B cell (primary cell): ENCODE measurements at regions of chr5 and their contacts with region 1.

Region 1: GRCh38 chr5:18216016-18216415 is 581.8 kb downstream of the TAF11L14 start:
- DNase-seq: no peak
- ATAC-seq: no peak
- H3K4me3 ChIP-seq: no peak overlapping the region
- H3K4me3 Mint-ChIP-seq: no peak overlapping the region
- H3K27ac ChIP-seq: no peak overlapping the region
- H3K27ac Mint-ChIP-seq: no peak overlapping the region
- H3K4me1 ChIP-seq: no peaks in the 10 kb centered on the region
- H3K4me1 Mint-ChIP-seq: no peaks in the 10 kb centered on the region
- H3K27me3 ChIP-seq: no peaks in the 10 kb centered on the region
- H3K27me3 Mint-ChIP-seq: no peaks in the 10 kb centered on the region
- CTCF ChIP-seq: no peak

Region 2: DNA sequence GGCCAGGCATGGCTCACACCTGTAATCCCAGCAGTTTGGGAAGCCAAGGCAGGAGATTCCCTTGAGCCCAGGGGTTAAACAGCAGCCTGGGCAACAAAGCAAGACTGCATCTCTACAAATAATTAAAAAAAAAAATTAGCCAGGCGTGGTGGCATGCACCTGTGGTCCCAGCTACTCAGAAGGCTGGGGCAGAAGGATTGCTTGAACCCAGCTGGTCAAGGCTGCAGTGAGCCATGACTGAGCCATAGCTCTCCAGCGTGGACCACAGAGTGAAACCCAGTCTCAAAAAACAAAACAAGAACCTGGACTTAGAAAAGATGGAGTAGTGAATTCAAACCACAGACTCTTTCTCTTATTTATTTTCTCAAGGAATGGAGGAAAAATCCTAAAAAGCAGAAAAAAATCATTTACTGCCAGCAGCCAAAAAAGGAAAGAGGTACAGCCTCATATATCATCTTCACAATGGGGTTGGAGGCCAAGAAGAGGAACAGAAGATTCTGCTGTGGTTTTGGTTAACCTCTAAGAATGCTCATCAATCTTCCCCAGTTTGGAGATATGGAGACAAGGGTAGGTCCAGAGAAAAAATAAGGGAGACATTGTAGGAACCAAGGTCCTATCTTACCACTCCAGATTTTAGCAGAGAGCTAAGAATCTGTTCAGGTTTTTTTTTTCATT is 1239.9 kb before region 1 on chr5:
- CTCF ChIA-PET with region 1: no interaction called
- POLR2A ChIA-PET with region 1: no interaction called
- intact Hi-C with region 1: loop called (anchors 5 kb)
- DNase-seq: no peak
- ATAC-seq: no peak
- H3K4me3 ChIP-seq: no peak overlapping the region
- H3K4me3 Mint-ChIP-seq: no peak overlapping the region
- H3K27ac ChIP-seq: no peak overlapping the region
- H3K27ac Mint-ChIP-seq: no peak overlapping the region
- H3K4me1 ChIP-seq: no peaks in the 10 kb centered on the region
- H3K4me1 Mint-ChIP-seq: no peaks in the 10 kb centered on the region
- H3K27me3 ChIP-seq: no peaks in the 10 kb centered on the region
- H3K27me3 Mint-ChIP-seq: no peaks in the 10 kb centered on the region
- CTCF ChIP-seq: no peak